ENCODE measurements at regions of chrX and their contacts with region 1.

Region 1: GRCh38 chrX:129781134-129781672 is 1.5 kb downstream of the SASH3 start:
- DNase-seq: peak; percentile 92
- H3K4me3 Mint-ChIP-seq: peak overlapping the region; percentile 79
- H3K27ac Mint-ChIP-seq: peak overlapping the region; percentile 97
- H3K4me1 Mint-ChIP-seq: peaks cover 53% of the 10 kb centered on the region
- H3K27me3 Mint-ChIP-seq: no peaks in the 10 kb centered on the region

Region 2: GRCh38 chrX:129565046-129565650 is 216.1 kb before region 1 on chrX:
- CTCF ChIA-PET with region 1: no interaction called
- POLR2A ChIA-PET with region 1: no interaction called
- intact Hi-C with region 1: no loop called
- DNase-seq: no peak
- H3K4me3 Mint-ChIP-seq: no peak overlapping the region
- H3K27ac Mint-ChIP-seq: no peak overlapping the region
- H3K4me1 Mint-ChIP-seq: peaks cover 11% of the 10 kb centered on the region
- H3K27me3 Mint-ChIP-seq: no peaks in the 10 kb centered on the region

Region 3: GRCh38 chrX:129759576-129760061 is 21.6 kb before region 1 on chrX:
- CTCF ChIA-PET with region 1: interaction called, 40 read pairs
- POLR2A ChIA-PET with region 1: interaction called, 58 read pairs
- intact Hi-C with region 1: loop called (anchors 1 kb)
- DNase-seq: peak; percentile 81
- H3K4me3 Mint-ChIP-seq: peak overlapping the region; percentile 46
- H3K27ac Mint-ChIP-seq: peak overlapping the region; percentile 90
- H3K4me1 Mint-ChIP-seq: peaks cover 57% of the 10 kb centered on the region
- H3K27me3 Mint-ChIP-seq: no peaks in the 10 kb centered on the region

Region 4: DNA sequence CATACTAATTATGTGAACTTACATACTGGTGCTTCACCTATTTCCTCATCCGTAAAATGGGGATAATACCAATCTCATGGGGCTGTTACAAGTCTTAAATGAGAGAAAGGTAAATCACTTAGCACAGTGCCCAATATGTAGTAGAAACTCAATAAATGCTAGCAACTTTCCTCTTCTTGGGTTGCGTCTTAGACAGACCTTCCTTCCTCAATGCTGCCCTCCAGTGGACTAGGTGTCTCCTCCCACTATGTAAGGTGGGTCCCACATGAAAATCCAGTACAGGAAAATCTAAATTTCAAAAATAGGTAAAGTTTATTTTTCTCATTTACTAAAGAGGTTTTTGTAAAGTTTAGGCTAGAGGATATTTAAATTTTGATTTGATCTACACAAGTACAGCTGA is 41.9 kb after region 1 on chrX:
- CTCF ChIA-PET with region 1: interaction called, 4 read pairs
- POLR2A ChIA-PET with region 1: no interaction called
- intact Hi-C with region 1: loop called (anchors 2 kb)
- DNase-seq: peak; percentile 46
- H3K4me3 Mint-ChIP-seq: no peak overlapping the region
- H3K27ac Mint-ChIP-seq: peak overlapping the region; percentile 81
- H3K4me1 Mint-ChIP-seq: peaks cover 16% of the 10 kb centered on the region
- H3K27me3 Mint-ChIP-seq: no peaks in the 10 kb centered on the region

Region 5: DNA sequence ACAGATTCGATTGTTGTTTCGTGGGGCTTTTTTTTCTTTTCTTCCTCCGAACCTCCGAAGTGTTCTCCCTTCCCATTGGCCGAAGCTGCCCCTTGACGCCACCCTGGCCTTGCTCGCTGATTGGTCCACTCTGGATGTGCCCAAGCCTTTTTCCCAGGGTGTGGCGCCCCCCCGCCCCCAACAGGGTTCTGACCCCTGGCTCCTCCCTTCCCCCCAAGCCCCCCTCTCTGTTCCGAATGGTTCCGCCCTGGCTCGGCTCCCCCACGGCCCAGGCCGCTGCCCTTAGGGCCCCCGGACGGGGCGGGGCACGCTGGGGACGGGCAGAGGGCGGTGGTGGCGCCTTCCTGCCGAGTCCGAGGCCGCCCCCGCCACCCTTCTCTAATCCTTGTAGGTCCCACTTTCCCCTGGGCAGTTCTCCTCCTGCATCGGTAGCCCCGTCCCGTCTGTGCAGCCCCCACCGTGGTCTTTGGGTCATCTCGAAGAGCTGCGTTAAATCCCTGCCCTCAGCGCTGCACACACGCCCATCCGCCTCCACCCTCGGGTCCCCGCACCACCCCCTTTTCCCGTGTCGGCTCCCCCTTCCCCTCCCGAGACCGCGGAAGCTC is 150.3 kb after region 1 on chrX:
- CTCF ChIA-PET with region 1: interaction called, 5 read pairs
- POLR2A ChIA-PET with region 1: no interaction called
- intact Hi-C with region 1: loop called (anchors 1 kb)
- DNase-seq: peak; percentile 81
- H3K4me3 Mint-ChIP-seq: peak overlapping the region; percentile 74
- H3K27ac Mint-ChIP-seq: peak overlapping the region; percentile 80
- H3K4me1 Mint-ChIP-seq: peaks cover 3% of the 10 kb centered on the region
- H3K27me3 Mint-ChIP-seq: peaks cover 3% of the 10 kb centered on the region

Region 6: GRCh38 chrX:130086447-130087206 is 305.4 kb after region 1 on chrX:
- CTCF ChIA-PET with region 1: no interaction called
- POLR2A ChIA-PET with region 1: no interaction called
- intact Hi-C with region 1: loop called (anchors 2 kb)
- DNase-seq: peak; percentile 82
- H3K4me3 Mint-ChIP-seq: peak overlapping the region; percentile 51
- H3K27ac Mint-ChIP-seq: peak overlapping the region; percentile 90
- H3K4me1 Mint-ChIP-seq: peaks cover 69% of the 10 kb centered on the region
- H3K27me3 Mint-ChIP-seq: no peaks in the 10 kb centered on the region

Region 7: GRCh38 chrX:130401415-130402207 is 620.4 kb after region 1 on chrX and contains the start of gene RBMX2:
- CTCF ChIA-PET with region 1: no interaction called
- POLR2A ChIA-PET with region 1: no interaction called
- intact Hi-C with region 1: loop called (anchors 5 kb)
- DNase-seq: peak; percentile 76
- H3K4me3 Mint-ChIP-seq: peak within 1 kb of the TSS; percentile 83
- H3K27ac Mint-ChIP-seq: peak within 1 kb of the TSS; percentile 87
- H3K4me1 Mint-ChIP-seq: peaks cover 26% of the 10 kb centered on the region
- H3K27me3 Mint-ChIP-seq: peaks cover 6% of the 10 kb centered on the region
- total RNA-seq, gene RBMX2: 28.4 to 29.8 TPM